ENCODE measurements at regions of chr10 and their contacts with region 1.

Region 1: DNA sequence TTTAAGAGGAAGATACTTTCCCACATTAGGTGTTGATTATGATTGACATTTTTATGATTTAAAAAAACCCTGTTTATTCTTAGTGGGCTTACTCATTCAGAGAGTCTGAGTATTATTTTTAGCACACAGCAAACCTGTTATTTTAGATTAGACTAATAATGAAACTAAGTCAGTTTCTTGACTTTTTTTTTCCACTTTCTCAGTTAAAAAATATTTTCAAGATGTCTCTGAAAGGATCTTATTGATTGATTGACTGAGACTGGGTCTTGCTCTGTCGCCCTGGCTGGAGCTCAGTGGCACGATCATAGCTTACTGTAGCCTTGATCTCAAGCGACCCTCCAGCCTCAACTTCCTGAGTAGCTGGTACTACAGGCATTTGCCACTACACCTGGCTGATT is 20.4 kb upstream of the INPP5F start:
- DNase-seq: no peak
- H3K4me3 Mint-ChIP-seq: no peak overlapping the region
- H3K27ac Mint-ChIP-seq: peak overlapping the region; percentile 96
- H3K4me1 Mint-ChIP-seq: peaks cover 81% of the 10 kb centered on the region
- H3K27me3 Mint-ChIP-seq: no peaks in the 10 kb centered on the region

Region 2: GRCh38 chr10:118341791-118342637 is 1363.4 kb before region 1 on chr10 and contains the start of gene FAM204A:
- CTCF ChIA-PET with region 1: no interaction called
- intact Hi-C with region 1: loop called (anchors 10 kb)
- DNase-seq: peak; percentile 98
- H3K4me3 Mint-ChIP-seq: peak within 1 kb of the TSS; percentile 95
- H3K27ac Mint-ChIP-seq: peak within 1 kb of the TSS; percentile 86
- H3K4me1 Mint-ChIP-seq: peaks cover 41% of the 10 kb centered on the region
- H3K27me3 Mint-ChIP-seq: no peaks in the 10 kb centered on the region
- total RNA-seq, gene FAM204A: 60.5 to 67.1 TPM

Region 3: DNA sequence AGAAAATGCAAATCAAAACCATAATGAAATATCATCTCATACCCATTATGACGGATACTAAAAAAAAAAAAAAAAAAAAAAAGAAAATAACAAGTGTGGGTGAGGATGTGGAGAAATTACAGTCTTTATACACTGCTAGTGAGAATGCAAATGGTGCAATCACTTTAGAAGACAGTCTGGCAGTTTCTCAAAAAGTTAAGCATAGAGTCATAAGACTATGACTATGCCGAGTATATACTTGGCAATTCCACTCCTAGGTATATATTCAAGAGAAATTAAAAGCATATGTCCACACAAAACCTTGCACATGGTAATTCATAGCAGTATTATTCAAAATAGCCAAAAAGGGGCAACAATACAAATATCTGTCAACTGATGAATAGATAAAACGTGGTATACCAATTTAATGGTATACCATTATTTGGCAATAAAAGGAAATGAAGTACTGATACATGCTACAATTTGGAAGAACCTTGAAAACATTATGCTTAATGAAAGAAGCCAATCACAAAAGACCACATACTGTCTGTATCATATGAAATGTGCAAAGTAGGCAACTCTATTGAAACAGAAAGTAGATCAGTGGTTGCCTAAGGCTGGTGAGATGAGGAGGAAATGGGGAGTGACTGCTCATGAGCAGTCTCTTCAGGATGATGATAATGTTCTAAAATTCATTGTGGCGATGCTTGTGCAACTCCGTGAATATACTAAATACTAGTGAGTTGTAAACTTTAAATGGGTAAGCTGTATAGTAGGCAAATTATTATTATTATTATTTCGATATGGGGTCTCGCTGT is 766.0 kb before region 1 on chr10:
- CTCF ChIA-PET with region 1: no interaction called
- intact Hi-C with region 1: no loop called
- DNase-seq: no peak
- H3K4me3 Mint-ChIP-seq: no peak overlapping the region
- H3K27ac Mint-ChIP-seq: no peak overlapping the region
- H3K4me1 Mint-ChIP-seq: no peaks in the 10 kb centered on the region
- H3K27me3 Mint-ChIP-seq: peaks cover 16% of the 10 kb centered on the region

Region 4: DNA sequence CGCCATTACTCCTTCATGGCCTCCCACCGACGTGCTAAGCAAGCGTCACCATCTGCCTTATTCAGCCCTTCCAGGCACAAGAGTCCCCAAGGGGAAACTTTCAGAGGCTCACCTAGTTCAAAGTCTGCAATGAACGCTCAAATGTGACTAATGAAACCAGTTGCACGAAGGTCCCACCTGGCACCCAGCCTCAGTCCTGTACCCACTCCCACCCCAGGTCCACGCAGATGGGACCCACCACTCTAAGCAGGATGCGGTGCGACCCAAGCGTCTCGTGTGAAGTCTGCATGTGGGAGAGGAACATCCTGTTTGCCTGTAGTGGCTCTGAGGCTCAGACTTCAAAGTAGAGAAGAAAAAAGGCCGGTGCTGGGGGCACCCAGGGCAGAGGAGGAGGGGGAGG is 203.2 kb before region 1 on chr10:
- CTCF ChIA-PET with region 1: no interaction called
- intact Hi-C with region 1: loop called (anchors 2 kb)
- DNase-seq: peak; percentile 93
- H3K4me3 Mint-ChIP-seq: peak overlapping the region; percentile 47
- H3K27ac Mint-ChIP-seq: peak overlapping the region; percentile 99
- H3K4me1 Mint-ChIP-seq: peaks cover 98% of the 10 kb centered on the region
- H3K27me3 Mint-ChIP-seq: no peaks in the 10 kb centered on the region

Region 5: GRCh38 chr10:119567978-119568377 is 137.5 kb before region 1 on chr10:
- CTCF ChIA-PET with region 1: no interaction called
- intact Hi-C with region 1: no loop called
- DNase-seq: no peak
- H3K4me3 Mint-ChIP-seq: no peak overlapping the region
- H3K27ac Mint-ChIP-seq: no peak overlapping the region
- H3K4me1 Mint-ChIP-seq: no peaks in the 10 kb centered on the region
- H3K27me3 Mint-ChIP-seq: no peaks in the 10 kb centered on the region

Region 6: GRCh38 chr10:119578355-119578754 is 127.1 kb before region 1 on chr10:
- CTCF ChIA-PET with region 1: no interaction called
- intact Hi-C with region 1: no loop called
- DNase-seq: no peak
- H3K4me3 Mint-ChIP-seq: no peak overlapping the region
- H3K27ac Mint-ChIP-seq: no peak overlapping the region
- H3K4me1 Mint-ChIP-seq: peaks cover 26% of the 10 kb centered on the region
- H3K27me3 Mint-ChIP-seq: no peaks in the 10 kb centered on the region

Region 7: GRCh38 chr10:119725828-119726675 is 20.6 kb after region 1 on chr10 and contains the start of gene INPP5F:
- CTCF ChIA-PET with region 1: interaction called, 6 read pairs
- intact Hi-C with region 1: loop called (anchors 1 kb)
- DNase-seq: peak; percentile 100
- H3K4me3 Mint-ChIP-seq: peak within 1 kb of the TSS; percentile 88
- H3K27ac Mint-ChIP-seq: peak within 1 kb of the TSS; percentile 78
- H3K4me1 Mint-ChIP-seq: peaks cover 41% of the 10 kb centered on the region
- H3K27me3 Mint-ChIP-seq: no peaks in the 10 kb centered on the region
- total RNA-seq, gene INPP5F: 10.5 to 10.9 TPM

Region 8: DNA sequence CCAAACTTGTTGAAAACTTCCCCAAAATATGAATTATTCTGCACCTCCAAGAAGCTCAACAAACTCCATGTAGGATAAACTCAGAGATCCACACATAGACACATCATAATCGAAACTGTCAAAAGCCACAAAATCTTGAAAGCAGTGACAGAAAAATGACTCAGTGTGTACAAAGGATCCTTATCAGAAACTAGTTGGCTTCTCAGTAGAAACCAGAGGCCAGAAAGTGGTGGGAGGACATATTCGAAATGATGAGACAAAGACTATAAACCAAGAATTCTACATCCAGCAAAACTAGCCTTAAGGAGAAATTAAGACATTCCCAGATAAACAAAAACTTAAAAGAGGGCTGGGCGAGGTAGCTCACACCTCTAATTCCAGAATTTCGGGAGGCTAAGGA is 128.8 kb after region 1 on chr10:
- CTCF ChIA-PET with region 1: no interaction called
- intact Hi-C with region 1: loop called (anchors 5 kb)
- DNase-seq: peak; percentile 18
- H3K4me3 Mint-ChIP-seq: no peak overlapping the region
- H3K27ac Mint-ChIP-seq: peak overlapping the region; percentile 46
- H3K4me1 Mint-ChIP-seq: peaks cover 23% of the 10 kb centered on the region
- H3K27me3 Mint-ChIP-seq: no peaks in the 10 kb centered on the region